Activated CD4-positive, alpha-beta T cell treated with anti-CD3 and anti-CD28 coated beads, Interleukin-2, amount 10 ng/mL, durations not matched to agents 7 days and 5 days (primary cell): ENCODE measurements at regions of chr2 and their contacts with region 1.

Region 1: DNA sequence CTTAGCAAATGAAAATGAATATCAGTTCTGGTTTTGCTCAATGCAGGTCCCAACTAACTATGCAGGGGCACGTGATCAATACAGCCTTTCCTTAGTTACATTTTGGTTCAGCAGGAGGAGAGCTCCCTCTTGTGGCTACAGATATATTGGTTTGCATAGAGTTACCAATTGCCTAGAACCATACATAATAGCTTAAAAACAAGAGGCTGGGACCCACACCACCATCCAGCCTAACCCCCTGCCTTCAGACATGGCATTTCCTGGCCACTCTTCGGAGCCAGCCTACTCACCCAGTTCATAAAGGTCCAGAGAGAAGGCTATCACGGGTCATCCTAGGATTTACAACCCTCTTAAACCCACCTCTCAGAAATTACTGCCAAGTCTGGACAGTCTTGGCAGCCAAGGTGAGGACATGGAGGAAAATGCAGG is 10.5 kb downstream of the CCDC93 start:
- DNase-seq: peak; percentile 78
- H3K4me3 Mint-ChIP-seq: no peak overlapping the region
- H3K27ac Mint-ChIP-seq: no peak overlapping the region
- H3K4me1 Mint-ChIP-seq: peaks cover 16% of the 10 kb centered on the region
- H3K27me3 Mint-ChIP-seq: no peaks in the 10 kb centered on the region

Region 2: GRCh38 chr2:117989854-117990438 is 13.5 kb before region 1 on chr2:
- CTCF ChIA-PET with region 1: interaction called, 32 read pairs
- POLR2A ChIA-PET with region 1: no interaction called
- DNase-seq: no peak
- H3K4me3 Mint-ChIP-seq: no peak overlapping the region
- H3K27ac Mint-ChIP-seq: no peak overlapping the region
- H3K4me1 Mint-ChIP-seq: no peaks in the 10 kb centered on the region
- H3K27me3 Mint-ChIP-seq: no peaks in the 10 kb centered on the region

Region 3: DNA sequence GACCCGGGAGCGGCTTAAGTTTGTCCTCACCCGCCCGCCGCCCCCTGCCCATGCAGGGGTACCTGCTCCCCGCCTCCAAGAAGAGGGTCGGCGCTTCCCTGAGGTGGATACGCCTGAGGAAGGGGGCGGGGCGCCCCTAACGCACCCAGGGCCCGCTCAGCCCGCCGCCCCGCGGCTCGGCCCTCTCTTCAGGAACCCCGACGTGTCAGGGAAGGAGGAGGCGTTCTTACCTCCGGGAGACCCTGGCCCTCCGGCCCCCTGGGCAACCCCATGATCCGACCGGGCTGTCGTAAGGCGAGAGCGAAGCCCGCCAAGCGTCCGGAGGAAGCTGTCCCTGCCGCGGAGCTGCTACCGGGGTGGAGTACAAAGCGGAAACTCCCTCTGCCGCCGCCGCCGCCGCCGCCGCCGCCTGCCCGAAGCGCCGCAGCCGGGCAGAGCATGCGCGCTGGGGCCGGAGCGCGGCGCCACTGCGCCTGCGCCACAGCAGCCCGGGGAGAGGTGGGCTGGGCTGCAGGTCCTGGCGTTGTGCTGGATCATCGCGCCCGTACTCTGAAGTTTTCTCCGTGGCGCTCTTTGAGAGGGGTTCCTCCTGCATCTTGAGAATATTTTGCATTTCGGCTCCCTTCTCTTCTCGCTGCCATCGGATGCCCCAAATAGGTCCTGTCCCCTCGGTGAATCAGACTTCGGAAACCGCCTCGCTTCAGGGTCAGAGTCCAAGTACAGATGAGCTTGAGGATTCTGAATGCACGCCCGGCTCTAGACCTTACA is 10.5 kb after region 1 on chr2 and contains the start of gene CCDC93:
- CTCF ChIA-PET with region 1: interaction called, 27 read pairs
- POLR2A ChIA-PET with region 1: no interaction called
- DNase-seq: peak; percentile 82
- H3K4me3 Mint-ChIP-seq: peak within 1 kb of the TSS; percentile 91
- H3K27ac Mint-ChIP-seq: peak within 1 kb of the TSS; percentile 90
- H3K4me1 Mint-ChIP-seq: peaks cover 46% of the 10 kb centered on the region
- H3K27me3 Mint-ChIP-seq: no peaks in the 10 kb centered on the region
- total RNA-seq, gene CCDC93: 35.5 to 39.1 TPM

Region 4: GRCh38 chr2:118169359-118170007 is 166.1 kb after region 1 on chr2:
- CTCF ChIA-PET with region 1: no interaction called
- POLR2A ChIA-PET with region 1: no interaction called
- DNase-seq: peak; percentile 46
- H3K4me3 Mint-ChIP-seq: no peak overlapping the region
- H3K27ac Mint-ChIP-seq: no peak overlapping the region
- H3K4me1 Mint-ChIP-seq: no peaks in the 10 kb centered on the region
- H3K27me3 Mint-ChIP-seq: peaks cover 5% of the 10 kb centered on the region